ENCODE measurements at regions of chr1 and their contacts with region 1.

Region 1: GRCh38 chr1:117534995-117535467 is 70.8 kb upstream of the TENT5C start:
- DNase-seq: peak in 8 of 9 experiments; percentile 8 to 79 (median 32)
- ATAC-seq: peak; percentile 89
- H3K4me3 ChIP-seq: no peak overlapping the region
- H3K4me3 Mint-ChIP-seq: no peak overlapping the region
- H3K27ac ChIP-seq: no peak overlapping the region
- H3K27ac Mint-ChIP-seq: no peak overlapping the region
- H3K4me1 ChIP-seq: peaks cover 13% of the 10 kb centered on the region
- H3K4me1 Mint-ChIP-seq: peaks cover 2% of the 10 kb centered on the region
- H3K27me3 ChIP-seq: no peaks in the 10 kb centered on the region
- H3K27me3 Mint-ChIP-seq: no peaks in the 10 kb centered on the region
- CTCF ChIP-seq: peak; percentile 61

Region 2: DNA sequence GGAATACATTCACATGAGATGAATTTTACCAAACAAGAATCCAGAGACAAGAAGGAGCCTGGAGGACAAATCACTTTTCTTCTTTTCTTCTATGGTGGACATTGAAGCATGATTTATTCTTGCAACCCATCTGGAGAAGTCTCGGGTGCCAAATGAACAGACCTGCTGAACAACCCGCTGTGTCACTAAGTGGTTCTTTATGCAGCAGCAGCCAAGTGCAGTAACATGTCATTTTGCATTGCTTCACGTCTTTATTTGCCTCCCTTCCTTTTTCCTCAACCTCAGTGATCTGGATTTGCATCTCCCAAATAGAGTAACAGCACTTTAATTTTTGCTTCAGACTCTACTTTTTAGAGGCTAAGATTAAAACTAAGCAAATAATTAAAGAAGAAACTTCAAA is 20.8 kb after region 1 on chr1:
- CTCF ChIA-PET with region 1: interaction called, 25 read pairs
- POLR2A ChIA-PET with region 1: no interaction called
- intact Hi-C with region 1: no loop called
- DNase-seq: no peak
- ATAC-seq: no peak
- H3K4me3 ChIP-seq: no peak overlapping the region
- H3K4me3 Mint-ChIP-seq: no peak overlapping the region
- H3K27ac ChIP-seq: no peak overlapping the region
- H3K27ac Mint-ChIP-seq: no peak overlapping the region
- H3K4me1 ChIP-seq: no peaks in the 10 kb centered on the region
- H3K4me1 Mint-ChIP-seq: no peaks in the 10 kb centered on the region
- H3K27me3 ChIP-seq: no peaks in the 10 kb centered on the region
- H3K27me3 Mint-ChIP-seq: peaks cover 5% of the 10 kb centered on the region
- CTCF ChIP-seq: no peak

Region 3: GRCh38 chr1:117573386-117574023 is 38.5 kb after region 1 on chr1:
- CTCF ChIA-PET with region 1: interaction called, 14 read pairs
- POLR2A ChIA-PET with region 1: no interaction called
- intact Hi-C with region 1: no loop called
- DNase-seq: peak in 1 of 9 experiments; percentile 15
- ATAC-seq: no peak
- H3K4me3 ChIP-seq: no peak overlapping the region
- H3K4me3 Mint-ChIP-seq: no peak overlapping the region
- H3K27ac ChIP-seq: no peak overlapping the region
- H3K27ac Mint-ChIP-seq: no peak overlapping the region
- H3K4me1 ChIP-seq: peaks cover 12% of the 10 kb centered on the region
- H3K4me1 Mint-ChIP-seq: peaks cover 19% of the 10 kb centered on the region
- H3K27me3 ChIP-seq: no peaks in the 10 kb centered on the region
- H3K27me3 Mint-ChIP-seq: no peaks in the 10 kb centered on the region
- CTCF ChIP-seq: no peak

Region 4: DNA sequence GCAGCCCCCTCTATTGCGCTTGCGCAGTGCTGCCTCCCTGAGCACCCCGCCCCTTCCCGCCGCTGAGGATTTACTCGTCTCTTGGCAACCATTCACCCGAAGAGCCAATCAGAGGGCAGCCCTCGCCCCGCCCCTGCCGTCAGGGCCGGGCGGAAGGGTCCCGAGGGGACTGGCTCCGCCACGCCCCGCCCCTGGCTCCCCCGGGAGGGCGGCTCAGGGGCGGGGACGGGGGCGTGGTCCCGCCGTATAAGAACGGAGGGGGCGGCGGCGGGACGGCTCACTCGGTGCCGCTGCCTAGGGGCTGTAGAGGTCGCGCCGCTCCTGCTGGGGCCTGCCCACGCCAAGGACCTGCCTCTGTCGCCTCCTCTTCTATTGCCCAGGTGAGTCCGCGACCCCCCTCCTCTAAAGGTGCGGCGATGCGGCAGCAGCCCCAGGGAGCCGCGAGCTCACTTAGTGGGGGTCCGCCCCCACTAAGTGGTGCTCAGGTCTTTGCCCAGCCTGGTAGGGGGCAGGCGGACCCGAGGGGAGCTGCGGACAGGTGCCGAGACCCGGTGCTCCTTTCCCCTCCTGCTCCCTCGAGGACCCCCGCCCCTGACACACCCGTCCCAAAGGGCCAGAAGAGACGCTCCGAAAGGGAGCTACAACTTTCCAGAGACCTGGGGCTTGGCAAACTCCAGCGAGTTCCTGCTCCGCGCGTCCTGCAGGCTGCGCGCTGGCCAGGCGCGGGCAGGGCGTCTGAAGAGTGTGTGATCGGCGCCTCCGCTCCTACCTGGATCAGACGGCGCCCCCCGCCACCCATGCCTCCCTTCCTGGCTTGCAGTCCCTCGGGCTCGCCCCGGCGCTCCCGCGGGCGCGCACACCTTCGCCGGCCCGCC is 71.0 kb after region 1 on chr1 and contains the start of gene TENT5C:
- CTCF ChIA-PET with region 1: interaction called, 25 read pairs
- POLR2A ChIA-PET with region 1: interaction called, 4 read pairs
- intact Hi-C with region 1: loop called (anchors 2 to 5 kb)
- DNase-seq: peak; percentile 96 to 99 (median 99)
- ATAC-seq: peak; percentile 91
- H3K4me3 ChIP-seq: peak within 1 kb of the TSS; percentile 91 to 93
- H3K4me3 Mint-ChIP-seq: peak within 1 kb of the TSS; percentile 100
- H3K27ac ChIP-seq: peak within 1 kb of the TSS; percentile 95
- H3K27ac Mint-ChIP-seq: peak within 1 kb of the TSS; percentile 97
- H3K4me1 ChIP-seq: peaks cover 16% of the 10 kb centered on the region
- H3K4me1 Mint-ChIP-seq: peaks cover 36% of the 10 kb centered on the region
- H3K27me3 ChIP-seq: no peaks in the 10 kb centered on the region
- H3K27me3 Mint-ChIP-seq: no peaks in the 10 kb centered on the region
- CTCF ChIP-seq: no peak
- total RNA-seq, gene TENT5C: 146 to 150 TPM

Region 5: DNA sequence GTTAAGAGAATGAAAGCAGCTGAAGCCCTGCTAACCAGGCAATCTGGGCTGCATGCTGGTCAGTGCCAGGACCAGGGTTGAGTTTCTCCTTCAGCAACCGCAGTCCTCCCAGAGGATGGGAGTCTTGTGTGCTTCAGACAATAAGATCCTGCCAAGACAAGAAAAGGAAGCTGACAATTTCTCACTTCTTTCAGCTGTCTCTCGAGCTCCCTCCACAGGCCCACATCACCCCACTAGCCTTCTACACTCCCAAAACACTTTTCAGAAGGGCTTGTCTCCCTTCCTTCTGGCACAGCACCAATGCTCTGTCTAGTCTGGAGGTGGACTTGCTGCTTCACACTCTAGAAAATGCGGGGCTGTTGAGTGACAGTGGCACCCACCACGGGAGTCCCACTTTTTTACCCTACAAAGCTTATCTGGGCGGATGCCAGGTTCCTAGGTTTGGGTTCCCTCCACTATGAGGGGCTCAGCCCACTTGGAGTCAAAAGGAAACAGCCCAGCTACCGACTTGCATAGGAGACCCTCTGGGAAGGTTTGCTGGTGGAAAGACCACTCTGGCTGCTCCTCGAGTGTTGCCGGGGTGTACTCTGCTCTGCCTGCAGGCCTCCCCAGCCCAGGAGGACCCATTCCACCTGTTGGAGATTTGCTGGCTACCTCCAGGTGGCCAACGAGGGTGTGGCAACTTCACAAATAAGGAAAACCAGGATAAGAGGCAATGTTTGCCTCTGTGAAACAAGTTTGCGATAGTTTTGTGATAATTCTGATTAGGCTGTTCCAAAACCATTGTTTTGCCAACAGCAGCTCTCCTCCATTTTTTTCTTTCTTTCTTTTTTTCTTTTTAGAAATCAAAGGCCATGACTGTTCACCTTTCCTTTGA is 139.7 kb after region 1 on chr1:
- CTCF ChIA-PET with region 1: interaction called, 263 read pairs
- POLR2A ChIA-PET with region 1: interaction called, 3 read pairs
- intact Hi-C with region 1: loop called (anchors 1 kb)
- DNase-seq: peak in 8 of 9 experiments; percentile 34 to 83 (median 67)
- ATAC-seq: peak; percentile 86
- H3K4me3 ChIP-seq: no peak overlapping the region
- H3K4me3 Mint-ChIP-seq: no peak overlapping the region
- H3K27ac ChIP-seq: no peak overlapping the region
- H3K27ac Mint-ChIP-seq: no peak overlapping the region
- H3K4me1 ChIP-seq: no peaks in the 10 kb centered on the region
- H3K4me1 Mint-ChIP-seq: peaks cover 6% of the 10 kb centered on the region
- H3K27me3 ChIP-seq: no peaks in the 10 kb centered on the region
- H3K27me3 Mint-ChIP-seq: peaks cover 14% of the 10 kb centered on the region
- CTCF ChIP-seq: peak; percentile 58

Region 6: GRCh38 chr1:117685936-117686806 is 151.1 kb after region 1 on chr1:
- CTCF ChIA-PET with region 1: interaction called, 19 read pairs
- POLR2A ChIA-PET with region 1: no interaction called
- intact Hi-C with region 1: no loop called
- DNase-seq: peak in 2 of 9 experiments; percentile 23 to 33
- ATAC-seq: peak; percentile 58
- H3K4me3 ChIP-seq: no peak overlapping the region
- H3K4me3 Mint-ChIP-seq: no peak overlapping the region
- H3K27ac ChIP-seq: no peak overlapping the region
- H3K27ac Mint-ChIP-seq: no peak overlapping the region
- H3K4me1 ChIP-seq: no peaks in the 10 kb centered on the region
- H3K4me1 Mint-ChIP-seq: no peaks in the 10 kb centered on the region
- H3K27me3 ChIP-seq: no peaks in the 10 kb centered on the region
- H3K27me3 Mint-ChIP-seq: peaks cover 9% of the 10 kb centered on the region
- CTCF ChIP-seq: no peak

Region 7: GRCh38 chr1:118404024-118404423 is 869.0 kb after region 1 on chr1:
- CTCF ChIA-PET with region 1: no interaction called
- POLR2A ChIA-PET with region 1: no interaction called
- intact Hi-C with region 1: no loop called
- DNase-seq: no peak
- ATAC-seq: no peak
- H3K4me3 ChIP-seq: no peak overlapping the region
- H3K4me3 Mint-ChIP-seq: no peak overlapping the region
- H3K27ac ChIP-seq: no peak overlapping the region
- H3K27ac Mint-ChIP-seq: no peak overlapping the region
- H3K4me1 ChIP-seq: no peaks in the 10 kb centered on the region
- H3K4me1 Mint-ChIP-seq: no peaks in the 10 kb centered on the region
- H3K27me3 ChIP-seq: no peaks in the 10 kb centered on the region
- H3K27me3 Mint-ChIP-seq: no peaks in the 10 kb centered on the region
- CTCF ChIP-seq: no peak